CD14-positive monocyte (primary cell): ENCODE measurements at regions of chr13 and their contacts with region 1.

Region 1: GRCh38 chr13:43804461-43805070 is 17.8 kb upstream of the ENOX1 start:
- DNase-seq: peak; percentile 22 to 55 (median 27)
- H3K4me3 ChIP-seq: no peak overlapping the region
- H3K4me3 Mint-ChIP-seq: no peak overlapping the region
- H3K27ac ChIP-seq: no peak overlapping the region
- H3K27ac Mint-ChIP-seq: no peak overlapping the region
- H3K4me1 ChIP-seq: no peaks in the 10 kb centered on the region
- H3K4me1 Mint-ChIP-seq: peaks cover 8% of the 10 kb centered on the region
- H3K27me3 ChIP-seq: no peaks in the 10 kb centered on the region
- H3K27me3 Mint-ChIP-seq: peaks cover 0 to 3% (median 2%) of the 10 kb centered on the region in 3 donors
- CTCF ChIP-seq: peak; percentile 75

Region 2: GRCh38 chr13:42594970-42595571 is 1209.5 kb before region 1 on chr13:
- intact Hi-C with region 1: loop called (anchors 5 to 10 kb)
- DNase-seq: peak; percentile 23 to 53 (median 46)
- H3K4me3 ChIP-seq: no peak overlapping the region
- H3K4me3 Mint-ChIP-seq: no peak overlapping the region
- H3K27ac ChIP-seq: no peak overlapping the region
- H3K27ac Mint-ChIP-seq: no peak overlapping the region
- H3K4me1 ChIP-seq: no peaks in the 10 kb centered on the region
- H3K4me1 Mint-ChIP-seq: peaks cover 6% of the 10 kb centered on the region
- H3K27me3 ChIP-seq: no peaks in the 10 kb centered on the region
- H3K27me3 Mint-ChIP-seq: peaks cover 2 to 8% (median 4%) of the 10 kb centered on the region in 3 donors
- CTCF ChIP-seq: peak; percentile 90